ENCODE measurements at regions of chr3 and their contacts with region 1.

Region 1: DNA sequence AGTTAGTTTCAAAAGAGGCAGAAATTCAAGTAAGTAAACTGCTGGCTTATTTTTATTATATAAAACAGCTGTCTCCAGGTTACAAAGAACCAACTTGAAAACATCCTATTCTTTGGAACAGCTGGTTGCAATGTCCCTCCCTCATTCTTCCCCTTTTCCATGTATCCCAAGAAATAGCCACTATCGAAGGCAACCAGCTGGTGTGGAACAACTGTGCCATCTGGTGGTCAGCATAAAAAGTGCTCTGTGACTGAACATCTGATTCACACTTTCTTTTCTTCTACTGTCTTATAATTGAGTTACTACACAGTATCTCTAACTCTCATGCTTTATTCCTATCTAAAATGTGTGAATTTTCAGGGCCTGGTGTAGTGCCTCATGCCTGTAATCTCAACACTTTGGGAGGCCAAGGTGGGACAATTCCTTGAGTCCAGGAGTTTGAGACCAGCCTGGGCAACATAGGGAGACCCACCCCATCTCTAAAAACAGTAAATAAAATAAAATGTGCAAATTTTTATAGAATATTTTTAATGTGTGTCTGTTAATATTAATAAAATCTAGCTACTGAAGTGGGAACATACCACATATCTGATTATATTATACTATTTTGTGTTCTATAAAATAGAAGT is 9.6 kb downstream of the OSBPL11 start:
- DNase-seq: peak; percentile 79
- H3K4me3 ChIP-seq: no peak overlapping the region
- H3K27ac ChIP-seq: peak overlapping the region in 1 of 4 donors; percentile 14
- H3K4me1 ChIP-seq: peaks cover 0 to 41% (median 18%) of the 10 kb centered on the region in 4 donors
- H3K27me3 ChIP-seq: no peaks in the 10 kb centered on the region
- CTCF ChIP-seq: peak; percentile 57 to 85 (median 82)
- EP300 ChIP-seq: no peak
- POLR2A ChIP-seq: no peak

Region 2: DNA sequence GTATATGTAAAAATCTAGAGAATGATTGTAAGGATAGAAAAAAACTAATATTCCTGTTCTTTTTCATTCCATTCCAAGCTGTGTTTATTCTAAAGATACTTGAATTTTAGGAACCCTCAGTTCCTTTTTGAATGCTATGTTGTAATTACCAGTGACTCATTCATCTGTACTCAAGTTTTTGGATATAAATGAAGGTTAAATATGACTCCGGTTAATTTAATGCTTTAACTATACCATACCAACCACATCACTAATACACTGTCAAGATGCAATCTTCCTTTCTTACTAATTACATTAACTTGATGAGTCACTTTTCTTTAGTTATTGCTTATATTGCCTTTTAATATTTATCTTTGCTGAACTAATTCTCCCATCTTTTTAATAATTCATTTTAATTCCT is 141.8 kb before region 1 on chr3:
- intact Hi-C with region 1: loop called (anchors 10 kb)
- DNase-seq: no peak
- H3K4me3 ChIP-seq: no peak overlapping the region
- H3K27ac ChIP-seq: no peak overlapping the region
- H3K4me1 ChIP-seq: no peaks in the 10 kb centered on the region
- H3K27me3 ChIP-seq: no peaks in the 10 kb centered on the region
- CTCF ChIP-seq: no peak
- EP300 ChIP-seq: no peak
- POLR2A ChIP-seq: no peak

Region 3: GRCh38 chr3:125519678-125520589 is 65.8 kb before region 1 on chr3 and contains the start of gene SNX4:
- intact Hi-C with region 1: loop called (anchors 5 kb)
- DNase-seq: peak; percentile 98
- H3K4me3 ChIP-seq: peak within 1 kb of the TSS; percentile 76 to 99 (median 94)
- H3K27ac ChIP-seq: peak within 1 kb of the TSS; percentile 86 to 90 (median 88)
- H3K4me1 ChIP-seq: peaks cover 0 to 30% (median 26%) of the 10 kb centered on the region in 4 donors
- H3K27me3 ChIP-seq: no peaks in the 10 kb centered on the region
- CTCF ChIP-seq: no peak
- EP300 ChIP-seq: no peak
- POLR2A ChIP-seq: peak in 1 of 2 donors; percentile 36
- total RNA-seq, gene SNX4: 32.1 to 40.0 (median 37.6) TPM

Region 4: GRCh38 chr3:125767641-125768040 is 181.9 kb after region 1 on chr3:
- intact Hi-C with region 1: loop called (anchors 10 kb)
- DNase-seq: no peak
- H3K4me3 ChIP-seq: no peak overlapping the region
- H3K27ac ChIP-seq: no peak overlapping the region
- H3K4me1 ChIP-seq: peaks cover 0 to 11% (median 0%) of the 10 kb centered on the region in 4 donors
- H3K27me3 ChIP-seq: peaks cover 0 to 8% (median 0%) of the 10 kb centered on the region in 3 donors
- CTCF ChIP-seq: no peak
- EP300 ChIP-seq: no peak
- POLR2A ChIP-seq: no peak